ENCODE measurements at regions of chr14 and their contacts with region 1.

Region 1: GRCh38 chr14:45134051-45134958 is at the start of gene FKBP3:
- DNase-seq: peak; percentile 84
- ATAC-seq: peak; percentile 93
- H3K4me3 Mint-ChIP-seq: peak within 1 kb of the TSS; percentile 97
- H3K27ac Mint-ChIP-seq: peak within 1 kb of the TSS; percentile 99
- H3K4me1 Mint-ChIP-seq: peaks cover 43% of the 10 kb centered on the region
- H3K27me3 Mint-ChIP-seq: no peaks in the 10 kb centered on the region
- CTCF ChIP-seq: no peak
- total RNA-seq, gene FKBP3: 54.8 and 58.3 TPM in 2 replicates

Region 2: DNA sequence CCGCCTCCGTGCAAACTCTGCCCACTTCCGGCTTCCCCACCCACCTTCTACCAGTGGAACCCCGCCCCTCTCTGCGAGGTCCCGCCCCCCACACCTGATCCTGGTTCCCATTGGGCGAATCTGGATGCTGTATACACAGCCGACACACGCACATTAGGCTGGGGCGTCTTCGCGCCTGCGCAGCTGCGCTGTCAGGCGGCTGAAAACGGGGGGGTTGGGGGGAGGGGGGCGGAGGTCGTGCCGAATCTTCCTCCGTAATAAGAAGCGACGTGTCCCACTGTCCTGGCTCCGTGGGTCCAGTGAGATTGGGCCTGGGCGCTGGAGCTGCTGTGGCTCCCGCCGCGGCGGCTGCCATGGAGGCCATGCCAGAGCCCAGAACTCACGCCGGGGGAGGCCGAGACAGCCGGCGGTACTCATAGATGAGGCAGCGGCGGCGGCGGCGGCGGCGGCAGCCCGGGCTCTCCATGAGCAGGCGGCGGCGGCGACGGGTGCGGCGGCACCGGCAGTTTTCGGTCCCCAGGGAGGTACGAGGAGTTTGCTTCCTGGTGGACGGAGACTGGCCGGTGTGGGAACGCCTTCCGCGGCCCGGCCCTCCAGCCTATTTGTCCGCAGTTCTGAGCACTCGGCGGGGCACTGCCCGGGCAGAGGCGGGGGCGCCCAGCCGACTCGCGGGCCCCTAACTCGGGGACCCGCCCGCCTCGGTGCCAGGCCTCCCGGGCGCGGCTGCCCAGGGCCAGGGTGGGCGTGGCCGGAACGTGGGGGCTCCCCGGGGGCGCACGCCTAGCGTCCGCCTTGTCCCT is 237.1 kb before region 1 on chr14:
- CTCF ChIA-PET with region 1: no interaction called
- POLR2A ChIA-PET with region 1: interaction called, 6 read pairs
- intact Hi-C with region 1: loop called (anchors 1 kb)
- DNase-seq: peak; percentile 75
- ATAC-seq: peak; percentile 97
- H3K4me3 Mint-ChIP-seq: peak overlapping the region; percentile 93
- H3K27ac Mint-ChIP-seq: peak overlapping the region; percentile 94
- H3K4me1 Mint-ChIP-seq: peaks cover 17% of the 10 kb centered on the region
- H3K27me3 Mint-ChIP-seq: no peaks in the 10 kb centered on the region
- CTCF ChIP-seq: no peak

Region 3: GRCh38 chr14:44990533-44990932 is 143.8 kb before region 1 on chr14:
- CTCF ChIA-PET with region 1: no interaction called
- POLR2A ChIA-PET with region 1: interaction called, 13 read pairs
- intact Hi-C with region 1: no loop called
- DNase-seq: no peak
- ATAC-seq: no peak
- H3K4me3 Mint-ChIP-seq: no peak overlapping the region
- H3K27ac Mint-ChIP-seq: no peak overlapping the region
- H3K4me1 Mint-ChIP-seq: peaks cover 14% of the 10 kb centered on the region
- H3K27me3 Mint-ChIP-seq: no peaks in the 10 kb centered on the region
- CTCF ChIP-seq: no peak

Region 4: GRCh38 chr14:45112889-45113781 is 21.2 kb before region 1 on chr14:
- CTCF ChIA-PET with region 1: no interaction called
- POLR2A ChIA-PET with region 1: interaction called, 3 read pairs
- intact Hi-C with region 1: loop called (anchors 2 kb)
- DNase-seq: no peak
- ATAC-seq: no peak
- H3K4me3 Mint-ChIP-seq: no peak overlapping the region
- H3K27ac Mint-ChIP-seq: no peak overlapping the region
- H3K4me1 Mint-ChIP-seq: no peaks in the 10 kb centered on the region
- H3K27me3 Mint-ChIP-seq: no peaks in the 10 kb centered on the region
- CTCF ChIP-seq: no peak

Region 5: GRCh38 chr14:45267071-45267470 is 132.8 kb after region 1 on chr14:
- CTCF ChIA-PET with region 1: interaction called, 3 read pairs
- POLR2A ChIA-PET with region 1: no interaction called
- intact Hi-C with region 1: loop called (anchors 1 kb)
- DNase-seq: no peak
- ATAC-seq: no peak
- H3K4me3 Mint-ChIP-seq: no peak overlapping the region
- H3K27ac Mint-ChIP-seq: no peak overlapping the region
- H3K4me1 Mint-ChIP-seq: no peaks in the 10 kb centered on the region
- H3K27me3 Mint-ChIP-seq: peaks cover 5% of the 10 kb centered on the region
- CTCF ChIP-seq: no peak

Region 6: DNA sequence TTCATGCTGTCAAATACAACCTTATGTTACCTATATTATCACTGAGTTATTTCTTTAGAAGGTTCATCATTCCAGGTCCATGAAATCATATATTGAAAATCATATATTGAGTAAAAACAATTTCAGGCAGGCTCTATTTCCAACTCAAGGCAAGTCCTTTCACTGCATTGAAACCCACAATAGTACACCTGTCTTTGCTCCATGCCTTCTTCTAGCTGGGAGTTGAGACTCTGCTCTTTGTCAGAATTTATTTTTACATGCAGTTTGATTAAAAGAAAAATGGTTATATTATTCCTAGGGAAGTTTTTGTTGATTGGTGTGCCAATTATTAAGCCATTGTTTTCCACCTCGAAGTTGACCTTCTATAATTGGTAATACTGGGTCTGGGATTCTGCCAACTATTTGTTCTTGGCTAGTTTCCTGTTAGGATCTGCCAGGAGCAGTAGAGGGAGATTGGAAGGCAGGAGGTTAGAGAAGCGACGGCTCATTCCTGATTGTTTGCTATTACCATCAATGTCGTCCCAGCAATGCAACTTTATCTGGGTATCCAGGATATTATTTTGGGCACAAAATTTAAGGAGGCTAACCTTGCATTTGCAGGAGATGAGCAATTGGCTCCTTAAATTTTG is 198.2 kb after region 1 on chr14:
- CTCF ChIA-PET with region 1: no interaction called
- POLR2A ChIA-PET with region 1: no interaction called
- intact Hi-C with region 1: no loop called
- DNase-seq: no peak
- ATAC-seq: no peak
- H3K4me3 Mint-ChIP-seq: no peak overlapping the region
- H3K27ac Mint-ChIP-seq: no peak overlapping the region
- H3K4me1 Mint-ChIP-seq: no peaks in the 10 kb centered on the region
- H3K27me3 Mint-ChIP-seq: no peaks in the 10 kb centered on the region
- CTCF ChIP-seq: no peak

Measured in activated B cell treated with CpG ODN at 0.5 μM for 24 hours (primary cell).